Colonic mucosa (tissue), 4 donors: ENCODE measurements at regions of chr15 and their contacts with region 1.

Region 1: GRCh38 chr15:38991126-38991525 is 426.5 kb upstream of the RASGRP1 start:
- DNase-seq: no peak
- H3K4me3 ChIP-seq: no peak overlapping the region
- H3K27ac ChIP-seq: no peak overlapping the region
- H3K4me1 ChIP-seq: no peaks in the 10 kb centered on the region
- H3K27me3 ChIP-seq: no peaks in the 10 kb centered on the region
- CTCF ChIP-seq: peak; percentile 47

Region 2: DNA sequence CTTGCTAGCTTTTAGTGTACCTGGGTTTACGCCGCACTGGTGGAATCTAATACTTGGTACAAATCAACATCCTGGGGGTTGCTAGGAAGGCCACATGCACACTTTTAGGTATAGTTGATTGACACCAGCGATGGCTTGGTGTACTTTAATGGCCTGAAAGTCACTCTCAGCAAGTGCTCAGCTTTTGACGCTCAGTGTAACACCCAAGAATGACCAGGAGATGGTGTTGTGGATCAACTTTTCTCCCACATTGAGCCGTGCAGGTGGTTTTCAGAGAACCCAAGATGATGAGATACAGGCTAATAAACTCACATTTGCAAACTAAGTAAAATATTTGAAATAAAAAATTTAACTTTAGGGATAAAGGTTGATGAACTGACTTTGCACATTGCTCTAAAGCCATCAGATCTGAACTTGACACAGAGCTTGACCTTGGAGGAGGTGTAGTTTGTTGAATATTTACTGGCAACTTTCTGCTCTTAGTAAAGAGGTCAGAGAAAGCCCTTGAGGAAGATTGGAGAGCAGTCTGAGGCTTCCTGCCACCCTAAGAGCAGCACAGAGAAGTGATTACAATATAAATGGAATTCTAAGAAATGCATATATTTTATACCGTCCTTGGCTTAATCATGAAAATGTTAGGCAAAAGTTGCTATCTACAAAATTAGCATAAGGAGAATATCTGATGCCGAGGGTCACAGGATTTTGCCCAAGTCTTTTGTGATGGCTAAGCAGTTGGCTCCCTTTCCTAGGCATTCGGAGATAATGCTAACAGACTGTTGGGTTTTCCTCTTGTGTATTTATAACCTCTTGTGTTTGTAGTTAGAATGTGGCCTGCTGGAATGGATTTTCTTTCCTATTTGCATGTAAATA is 283.1 kb before region 1 on chr15:
- intact Hi-C with region 1: loop called (anchors 5 kb)
- DNase-seq: peak; percentile 55
- H3K4me3 ChIP-seq: no peak overlapping the region
- H3K27ac ChIP-seq: no peak overlapping the region
- H3K4me1 ChIP-seq: peaks cover 4% of the 10 kb centered on the region
- H3K27me3 ChIP-seq: no peaks in the 10 kb centered on the region
- CTCF ChIP-seq: peak; percentile 67

Region 3: DNA sequence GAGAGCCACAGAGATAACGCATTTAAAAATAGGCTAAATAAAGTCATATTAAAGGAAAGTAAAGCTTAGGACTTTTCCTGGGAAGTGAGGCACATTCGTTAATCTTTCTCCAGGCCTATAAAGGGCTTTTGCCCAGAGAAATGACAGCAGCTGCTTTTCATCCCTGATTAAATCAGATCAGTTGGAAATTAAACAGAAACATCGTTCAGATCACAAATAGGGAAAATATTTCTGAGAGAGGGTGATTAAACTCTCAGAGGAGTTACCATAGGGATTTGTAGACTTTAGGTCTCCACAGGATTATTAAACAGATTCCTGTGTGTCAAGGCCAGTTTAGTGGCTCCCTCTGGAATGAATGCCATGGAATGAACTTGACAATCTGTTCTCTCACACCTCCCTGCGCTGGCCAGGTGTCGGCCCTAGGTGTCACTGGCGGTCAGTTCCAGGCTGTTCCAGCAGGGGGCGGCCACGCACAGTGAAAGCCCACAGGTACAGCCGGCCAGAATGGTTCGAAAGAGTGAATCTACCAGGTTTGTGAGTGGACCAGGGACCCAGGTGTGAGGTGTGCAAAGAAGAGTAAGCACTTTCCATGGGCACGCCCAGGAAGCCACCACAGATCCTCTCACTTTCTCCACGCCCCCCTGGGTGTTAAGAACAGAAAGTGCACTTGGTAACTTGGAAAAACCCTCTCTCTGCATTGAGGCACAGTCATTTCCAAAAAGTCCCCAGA is 173.5 kb before region 1 on chr15:
- intact Hi-C with region 1: loop called (anchors 5 kb)
- DNase-seq: peak; percentile 93
- H3K4me3 ChIP-seq: no peak overlapping the region
- H3K27ac ChIP-seq: no peak overlapping the region
- H3K4me1 ChIP-seq: no peaks in the 10 kb centered on the region
- H3K27me3 ChIP-seq: no peaks in the 10 kb centered on the region
- CTCF ChIP-seq: peak; percentile 98